Mammary epithelial cell (primary cell): ENCODE measurements at regions of chr19 and their contacts with region 1.

Region 1: GRCh38 chr19:33795370-33796163 is 1.1 kb upstream of the KCTD15 start:
- DNase-seq: peak; percentile 75
- H3K4me3 ChIP-seq: peak overlapping the region; percentile 71 to 85 (median 81)
- H3K27ac ChIP-seq: peak overlapping the region; percentile 65
- H3K4me1 ChIP-seq: peaks cover 15% of the 10 kb centered on the region
- H3K27me3 ChIP-seq: no peaks in the 10 kb centered on the region
- CTCF ChIP-seq: peak; percentile 38 to 73

Region 2: DNA sequence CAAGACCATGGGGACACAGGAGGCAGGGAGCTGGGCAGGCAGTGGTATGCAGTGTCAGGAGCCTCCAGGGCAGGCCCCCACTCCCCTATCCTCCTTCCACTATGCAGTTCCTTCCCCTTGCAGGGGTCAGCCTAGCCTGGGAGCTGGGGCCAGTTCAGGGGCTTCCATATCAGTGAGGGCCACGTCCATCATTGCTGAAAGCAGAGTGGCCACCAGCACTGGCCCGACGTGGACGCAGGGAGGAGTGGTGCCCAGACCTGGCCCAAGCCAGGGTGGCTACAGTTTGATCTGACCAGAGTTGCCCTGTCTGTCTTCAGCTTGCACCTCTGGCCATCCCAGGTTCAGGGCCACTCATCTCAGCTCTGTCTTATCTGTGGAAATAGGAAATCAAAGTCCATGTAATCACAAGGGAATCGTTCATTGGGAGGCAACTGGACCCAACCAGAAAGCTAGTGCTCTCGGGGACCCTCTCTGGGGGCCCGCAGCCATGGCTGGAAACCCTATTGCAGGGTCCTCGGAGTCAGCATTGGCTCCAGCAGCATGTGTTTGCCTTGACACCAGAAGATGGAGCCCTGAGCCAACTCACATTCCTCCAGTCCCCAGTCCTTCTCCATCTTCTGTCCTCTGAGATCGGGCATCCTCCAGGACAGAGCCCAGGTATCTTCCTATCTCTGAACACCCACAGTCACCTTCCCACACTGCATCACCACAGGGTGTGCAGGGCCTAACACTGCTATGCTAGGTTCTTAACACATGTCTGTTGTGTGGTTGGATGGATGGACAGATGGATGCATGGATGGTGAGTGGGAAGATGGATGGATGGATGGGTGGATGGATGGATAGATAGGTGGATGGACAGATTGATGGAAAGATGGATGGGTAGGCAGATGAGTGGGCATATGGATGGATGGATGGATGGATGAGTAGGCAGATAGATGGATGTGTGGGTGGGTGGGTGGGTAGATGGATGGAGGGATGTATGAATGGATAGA is 74.6 kb before region 1 on chr19:
- CTCF ChIA-PET with region 1: no interaction called
- dilution Hi-C with region 1: no loop called
- in situ Hi-C with region 1: no loop called
- intact Hi-C with region 1: no loop called
- DNase-seq: no peak
- H3K4me3 ChIP-seq: no peak overlapping the region
- H3K27ac ChIP-seq: no peak overlapping the region
- H3K4me1 ChIP-seq: no peaks in the 10 kb centered on the region
- H3K27me3 ChIP-seq: peaks cover 2% of the 10 kb centered on the region
- CTCF ChIP-seq: no peak

Region 3: GRCh38 chr19:33819880-33820781 is 24.6 kb after region 1 on chr19:
- CTCF ChIA-PET with region 1: no interaction called
- dilution Hi-C with region 1: no loop called
- in situ Hi-C with region 1: no loop called
- intact Hi-C with region 1: loop called (anchors 1 kb)
- DNase-seq: peak; percentile 96
- H3K4me3 ChIP-seq: peak overlapping the region; percentile 37 to 43 (median 41)
- H3K27ac ChIP-seq: peak overlapping the region; percentile 90
- H3K4me1 ChIP-seq: peaks cover 38% of the 10 kb centered on the region
- H3K27me3 ChIP-seq: no peaks in the 10 kb centered on the region
- CTCF ChIP-seq: no peak